HEK293 (cell line): ENCODE measurements at regions of chr19 and their contacts with region 1.

Region 1: DNA sequence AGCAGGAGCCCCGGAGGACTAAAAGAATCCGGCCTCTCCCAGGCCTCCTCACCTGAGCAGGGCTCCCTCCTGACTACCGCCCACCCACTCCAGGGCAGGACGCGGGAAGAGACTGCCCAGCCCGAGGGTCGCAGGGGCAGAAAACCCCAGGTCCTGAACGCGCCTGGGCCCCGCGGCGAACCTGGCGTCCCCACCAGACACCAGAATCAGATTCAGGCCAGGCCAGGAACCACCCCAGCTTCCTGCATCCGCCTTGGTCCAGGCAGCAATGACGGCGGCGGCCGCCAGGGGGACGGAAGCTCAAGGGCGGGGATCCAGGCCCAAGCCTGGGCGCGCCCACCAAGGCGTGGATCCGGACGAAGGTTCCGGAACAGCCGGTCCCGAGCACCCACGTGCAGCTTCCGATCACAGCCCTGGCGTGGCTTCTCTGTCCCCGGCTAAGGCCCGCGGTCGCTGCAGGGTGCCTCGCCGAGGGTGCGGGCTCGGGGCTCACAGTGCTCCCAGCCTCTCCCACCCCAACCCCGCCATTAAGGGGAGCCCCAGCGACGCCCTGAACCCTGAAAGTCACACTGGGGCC is 3.6 kb downstream of the LGALS7 start:
- H3K4me3 ChIP-seq: no peak overlapping the region
- H3K27ac ChIP-seq: peak overlapping the region; percentile 52; the same call in 1 of the 2 replicates
- H3K4me1 ChIP-seq: no peaks in the 10 kb centered on the region
- CTCF ChIP-seq: peak; percentile 46; the same call in 1 of the 2 replicates

Region 2: GRCh38 chr19:38707512-38708114 is 62.1 kb before region 1 on chr19:
- CTCF ChIA-PET with region 1: no interaction called
- POLR2A ChIA-PET with region 1: no interaction called
- H3K4me3 ChIP-seq: no peak overlapping the region
- H3K27ac ChIP-seq: peak overlapping the region; percentile 17; the same call in 1 of the 2 replicates
- H3K4me1 ChIP-seq: no peaks in the 10 kb centered on the region
- CTCF ChIP-seq: no peak

Region 3: DNA sequence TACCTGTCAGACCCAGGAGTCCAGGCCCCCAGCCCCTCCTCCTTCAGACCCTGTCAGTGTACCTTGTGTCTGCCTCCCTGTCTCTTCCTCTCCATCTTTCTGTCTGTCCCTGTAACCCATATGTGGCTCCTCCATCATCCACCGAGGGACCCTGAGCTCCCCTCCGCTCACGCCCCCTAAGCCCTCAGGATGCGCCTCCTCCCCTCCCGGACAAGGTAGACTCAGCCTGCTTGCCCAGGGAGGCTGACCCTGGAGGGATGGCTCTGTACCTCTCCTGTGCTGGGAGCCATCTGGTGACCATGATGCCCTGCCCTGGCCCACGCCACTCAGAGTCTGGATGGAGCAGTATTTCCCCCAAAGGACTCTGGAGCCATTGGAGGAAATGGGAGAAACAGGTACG is 24.4 kb before region 1 on chr19:
- CTCF ChIA-PET with region 1: interaction called, 12 read pairs
- POLR2A ChIA-PET with region 1: no interaction called
- H3K4me3 ChIP-seq: no peak overlapping the region
- H3K27ac ChIP-seq: no peak overlapping the region
- H3K4me1 ChIP-seq: no peaks in the 10 kb centered on the region; the same call in 1 of the 2 replicates
- CTCF ChIP-seq: no peak

Region 4: DNA sequence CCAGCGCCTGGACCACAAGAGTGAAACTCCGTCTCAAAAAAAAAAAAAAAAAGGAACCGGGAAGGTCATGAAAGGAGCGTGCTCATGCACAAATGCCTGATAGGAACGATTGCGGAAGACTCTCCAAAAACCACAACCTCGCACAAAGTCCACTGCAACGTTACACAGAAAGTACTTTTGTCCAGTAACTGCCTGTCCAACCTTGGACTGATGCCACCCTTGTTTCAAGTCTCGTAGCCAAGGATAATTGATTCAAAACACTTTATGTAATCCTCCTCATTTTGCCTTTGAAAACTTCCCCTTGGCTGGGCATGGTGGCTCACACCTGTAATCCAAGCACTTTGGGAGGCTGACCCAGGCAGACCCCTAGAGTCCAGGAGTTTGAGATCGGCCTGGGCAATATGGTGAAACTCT is 10.1 kb before region 1 on chr19:
- CTCF ChIA-PET with region 1: interaction called, 16 read pairs
- POLR2A ChIA-PET with region 1: no interaction called
- H3K4me3 ChIP-seq: no peak overlapping the region
- H3K27ac ChIP-seq: no peak overlapping the region
- H3K4me1 ChIP-seq: no peaks in the 10 kb centered on the region
- CTCF ChIP-seq: no peak

Region 5: GRCh38 chr19:38784224-38784623 is 14.5 kb after region 1 on chr19:
- CTCF ChIA-PET with region 1: interaction called, 21 read pairs
- POLR2A ChIA-PET with region 1: interaction called, 9 read pairs
- H3K4me3 ChIP-seq: no peak overlapping the region
- H3K27ac ChIP-seq: no peak overlapping the region
- H3K4me1 ChIP-seq: 0 out of 2 replicates have a peak, but pooled peaks cover 2% of the 10 kb centered on the region
- CTCF ChIP-seq: no peak

Region 6: GRCh38 chr19:38799071-38799744 is 29.5 kb after region 1 on chr19:
- CTCF ChIA-PET with region 1: interaction called, 10 read pairs
- POLR2A ChIA-PET with region 1: no interaction called
- H3K4me3 ChIP-seq: no peak overlapping the region
- H3K27ac ChIP-seq: no peak overlapping the region
- H3K4me1 ChIP-seq: no peaks in the 10 kb centered on the region
- CTCF ChIP-seq: no peak